Left ventricle myocardium superior (tissue), 1 donor: ENCODE measurements at regions of chr6 and their contacts with region 1.

Region 1: DNA sequence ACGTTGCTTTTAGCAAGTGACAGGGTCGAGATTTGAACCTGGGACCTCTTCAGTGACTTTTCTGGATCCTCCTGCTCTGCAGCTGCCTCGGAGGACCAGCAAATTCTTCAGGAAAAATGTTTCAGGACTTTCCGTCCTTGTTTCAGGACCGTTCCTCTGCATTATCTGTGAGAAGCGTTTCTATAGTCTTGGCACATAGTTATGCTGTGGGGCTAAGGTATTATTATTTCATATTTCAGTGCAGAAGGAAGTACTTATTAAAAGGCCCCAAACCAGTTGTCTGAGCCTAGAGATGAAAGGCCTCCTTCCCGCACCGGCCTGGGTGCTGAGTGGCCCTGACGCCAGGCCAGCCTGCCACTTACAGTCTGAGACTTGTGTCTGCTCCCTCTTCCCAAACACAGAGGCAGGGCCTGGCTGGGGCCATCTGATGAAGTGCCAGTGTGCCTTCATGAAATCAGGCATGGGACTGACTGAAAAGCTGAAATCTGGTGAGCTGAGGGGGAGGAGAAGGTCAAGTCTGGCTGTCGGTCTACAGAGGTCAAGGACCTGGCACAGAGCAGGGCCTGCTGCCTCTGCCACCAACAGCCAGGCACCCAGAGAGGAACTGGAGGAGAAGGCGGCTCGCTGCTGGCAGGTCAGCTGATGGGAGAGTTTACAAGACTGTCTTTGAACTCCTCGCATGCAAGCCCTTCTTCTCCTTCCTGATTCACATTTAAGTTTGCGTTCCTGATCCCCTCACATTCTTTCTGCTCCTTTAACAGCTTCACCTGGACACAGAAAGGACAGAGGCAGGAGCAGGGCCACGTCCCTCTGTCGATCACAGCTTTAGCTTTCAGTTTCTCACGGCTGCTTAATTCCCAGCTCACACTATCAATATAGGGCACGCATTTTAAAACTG is 8.9 kb upstream of the QKI start:
- DNase-seq: peak; percentile 80
- ATAC-seq: peak; percentile 90

Region 2: DNA sequence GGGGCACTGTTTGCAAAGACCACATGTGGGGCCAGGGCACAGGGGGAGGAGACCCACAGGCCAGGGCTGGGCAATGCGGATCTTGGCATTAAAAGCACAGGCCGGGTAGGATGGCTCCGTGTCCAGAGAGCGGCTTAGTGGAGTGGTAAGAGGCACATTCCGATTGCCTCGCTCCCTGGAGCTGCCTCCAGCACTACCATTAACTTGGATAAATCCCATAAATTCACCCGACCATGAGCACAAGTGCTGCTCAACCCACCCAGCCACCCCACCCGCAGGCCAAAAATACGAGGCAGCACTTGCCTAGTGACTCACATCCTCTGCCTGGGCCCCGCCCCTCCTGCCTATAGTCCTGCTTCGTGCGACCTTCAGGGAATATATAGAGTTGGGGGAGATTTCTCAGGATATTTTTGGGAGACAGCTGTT is 58.6 kb before region 1 on chr6:
- intact Hi-C with region 1: loop called (anchors 10 kb)
- DNase-seq: no peak
- ATAC-seq: peak; percentile 23